Natural killer cell (primary cell): ENCODE measurements at regions of chr5 and their contacts with region 1.

Region 1: GRCh38 chr5:35853631-35854030 is 3.1 kb upstream of the IL7R start:
- DNase-seq: peak in 1 of 2 donors; percentile 88
- ATAC-seq: peak in 2 of 3 donors; percentile 47 to 49
- H3K4me3 ChIP-seq: peak overlapping the region; percentile 15
- H3K4me3 Mint-ChIP-seq: no peak overlapping the region
- H3K27ac ChIP-seq: peak overlapping the region; percentile 96
- H3K27ac Mint-ChIP-seq: peak overlapping the region; percentile 59 to 74
- H3K4me1 ChIP-seq: peaks cover 21% of the 10 kb centered on the region
- H3K4me1 Mint-ChIP-seq: peaks cover 17 to 20% of the 10 kb centered on the region in 2 donors
- H3K27me3 ChIP-seq: no peaks in the 10 kb centered on the region
- H3K27me3 Mint-ChIP-seq: no peaks in the 10 kb centered on the region
- CTCF ChIP-seq: no peak

Region 2: GRCh38 chr5:35811108-35811741 is 42.4 kb before region 1 on chr5:
- intact Hi-C with region 1: loop called (anchors 2 kb)
- DNase-seq: peak in 1 of 2 donors; percentile 90
- ATAC-seq: peak; percentile 72 to 88 (median 77)
- H3K4me3 ChIP-seq: no peak overlapping the region
- H3K4me3 Mint-ChIP-seq: peak overlapping the region; percentile 51
- H3K27ac ChIP-seq: peak overlapping the region; percentile 91
- H3K27ac Mint-ChIP-seq: peak overlapping the region; percentile 53 to 81
- H3K4me1 ChIP-seq: peaks cover 14% of the 10 kb centered on the region
- H3K4me1 Mint-ChIP-seq: peaks cover 15 to 21% of the 10 kb centered on the region in 2 donors
- H3K27me3 ChIP-seq: no peaks in the 10 kb centered on the region
- H3K27me3 Mint-ChIP-seq: no peaks in the 10 kb centered on the region
- CTCF ChIP-seq: no peak